ENCODE measurements at regions of chr12 and their contacts with region 1.

Region 1: DNA sequence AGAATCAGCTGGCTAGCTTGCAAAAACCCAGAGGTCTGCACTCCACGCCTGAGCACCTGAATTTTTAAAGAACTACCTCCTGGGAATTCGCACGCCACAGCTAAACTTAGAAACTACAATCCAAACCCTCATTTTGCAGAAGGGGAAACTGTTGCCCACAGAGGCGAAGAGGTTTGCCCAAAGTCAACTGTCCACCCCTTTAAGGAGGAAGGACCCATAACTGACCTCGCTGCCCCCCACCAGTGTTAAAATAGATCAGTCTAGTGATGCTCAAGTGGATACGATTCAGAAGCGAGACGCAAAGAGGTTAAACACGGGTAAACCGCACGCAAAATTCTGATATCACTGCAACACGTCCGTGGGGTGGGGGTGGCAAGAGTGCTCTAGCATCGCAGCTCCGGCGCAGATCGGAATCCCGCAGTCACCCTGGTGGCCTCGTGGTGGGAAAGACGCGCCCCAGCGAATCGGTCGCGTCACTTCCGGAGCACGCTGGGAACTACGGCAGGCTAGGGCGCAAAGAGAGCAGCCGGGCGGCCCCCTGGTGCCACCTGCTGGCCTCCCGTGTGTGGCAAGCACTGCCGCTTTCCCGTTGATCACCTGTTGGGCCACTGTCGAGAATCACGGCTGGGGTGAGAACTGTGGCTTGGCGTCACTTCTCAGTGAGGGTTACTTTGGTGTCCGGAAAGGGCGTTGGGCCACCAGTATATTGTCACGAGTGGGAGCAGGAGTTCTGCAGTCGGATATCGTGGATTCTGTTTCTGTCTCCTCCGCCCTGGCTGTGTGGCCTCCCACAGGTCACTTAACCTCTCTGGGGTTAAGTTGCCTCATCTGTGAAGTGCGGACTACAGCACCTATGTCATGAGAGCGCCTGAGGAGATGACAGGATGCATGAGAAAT is at the start of gene ALKBH2:
- ATAC-seq: peak; percentile 64 to 74 (median 66)
- H3K4me3 ChIP-seq: peak within 1 kb of the TSS; percentile 44 to 61 (median 53)
- H3K27ac ChIP-seq: peak within 1 kb of the TSS; percentile 75 to 84
- H3K4me1 ChIP-seq: peaks cover 15% of the 10 kb centered on the region in 2 donors
- total RNA-seq, gene ALKBH2: 21.6 to 51.8 (median 37.7) TPM

Region 2: DNA sequence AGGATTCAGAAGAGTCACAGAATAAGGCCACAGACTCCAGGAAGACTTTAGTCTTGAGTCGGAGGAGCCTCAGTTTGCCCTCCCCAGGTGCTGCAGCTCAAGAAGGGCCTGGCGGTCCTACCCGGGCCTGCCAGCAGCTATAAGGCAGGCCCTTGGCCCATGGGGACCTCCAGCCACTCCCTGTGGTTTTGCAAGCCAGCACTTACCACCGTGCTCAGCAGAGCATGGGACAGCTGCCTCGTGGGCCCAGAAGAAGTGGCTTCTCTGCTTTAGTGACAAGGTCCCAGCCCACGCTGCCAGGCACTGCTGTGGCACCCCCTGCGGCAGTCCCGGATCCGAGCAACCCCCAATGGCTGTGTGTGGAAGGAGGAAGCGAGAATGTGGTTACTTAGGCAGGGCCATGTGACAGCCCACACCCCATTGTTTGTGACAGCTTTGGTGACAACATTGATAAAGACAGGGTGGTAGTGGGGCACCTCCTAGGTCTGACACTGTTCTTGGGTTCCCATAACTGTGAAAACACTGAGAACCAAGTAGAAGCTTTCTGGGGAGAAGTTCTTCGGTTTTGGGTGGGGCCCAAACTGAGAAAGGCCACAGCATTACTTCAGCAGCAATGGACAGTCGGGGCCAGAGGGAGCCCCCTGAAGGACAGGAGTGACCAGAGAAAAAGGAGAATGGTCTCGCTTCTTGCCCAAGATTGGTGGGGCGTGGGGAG is 459.6 kb before region 1 on chr12 and contains the start of gene SELPLG:
- in situ Hi-C with region 1: loop called in 1 of 9 experiments (anchors 25 kb)
- ATAC-seq: no peak
- H3K4me3 ChIP-seq: no peak within 1 kb of the TSS
- H3K27ac ChIP-seq: no peak within 1 kb of the TSS
- H3K4me1 ChIP-seq: peaks cover 36 to 40% of the 10 kb centered on the region in 2 donors
- total RNA-seq, gene SELPLG: 0.38 to 4.7 (median 1.0) TPM

Region 3: DNA sequence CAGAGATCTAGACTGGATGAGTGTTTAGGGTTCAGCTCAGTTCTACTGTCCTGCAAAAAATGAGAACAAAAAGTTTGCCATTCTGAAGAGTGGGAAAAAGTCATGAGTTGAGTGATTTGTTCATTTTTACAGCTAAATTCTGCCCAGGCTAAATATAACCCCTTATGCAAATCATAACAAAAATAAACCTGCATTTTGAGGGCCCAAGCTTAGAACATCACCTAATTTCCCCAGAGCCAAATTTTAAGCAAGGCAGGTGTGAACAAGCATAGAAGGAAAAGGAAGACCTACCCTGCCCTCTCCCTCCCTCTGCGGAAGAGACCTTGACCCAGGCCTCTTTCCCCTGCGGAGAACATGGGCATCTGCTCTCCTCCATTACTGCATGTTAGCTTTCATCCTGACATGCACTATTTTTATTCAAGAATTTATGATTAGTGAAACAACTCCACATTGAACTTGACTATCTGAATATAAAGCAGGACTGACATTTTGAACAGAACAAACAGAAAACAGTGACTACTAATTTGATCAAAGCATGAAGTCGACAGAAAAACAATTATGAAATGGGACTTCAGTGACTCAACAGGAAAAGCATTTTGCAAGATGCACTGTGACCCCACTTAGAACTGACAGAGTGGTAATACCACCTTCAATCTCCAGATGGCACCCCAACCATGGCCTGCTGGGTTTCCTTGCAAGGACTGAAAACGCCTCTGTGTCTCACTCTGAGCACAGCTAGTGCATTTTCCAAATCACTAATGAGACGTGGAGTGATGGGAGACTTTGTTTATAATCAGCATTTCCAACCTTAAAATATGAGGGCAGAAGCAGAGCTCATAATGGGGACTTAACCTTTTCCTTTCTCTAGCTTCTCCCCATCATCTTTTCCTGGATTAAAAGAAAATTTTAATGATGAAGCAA is 428.7 kb before region 1 on chr12:
- in situ Hi-C with region 1: loop called in 1 of 9 experiments (anchors 25 kb)
- ATAC-seq: peak; percentile 93 to 99 (median 96)
- H3K4me3 ChIP-seq: no peak overlapping the region
- H3K27ac ChIP-seq: no peak overlapping the region
- H3K4me1 ChIP-seq: peaks cover 0 to 6% of the 10 kb centered on the region in 2 donors

Region 4: DNA sequence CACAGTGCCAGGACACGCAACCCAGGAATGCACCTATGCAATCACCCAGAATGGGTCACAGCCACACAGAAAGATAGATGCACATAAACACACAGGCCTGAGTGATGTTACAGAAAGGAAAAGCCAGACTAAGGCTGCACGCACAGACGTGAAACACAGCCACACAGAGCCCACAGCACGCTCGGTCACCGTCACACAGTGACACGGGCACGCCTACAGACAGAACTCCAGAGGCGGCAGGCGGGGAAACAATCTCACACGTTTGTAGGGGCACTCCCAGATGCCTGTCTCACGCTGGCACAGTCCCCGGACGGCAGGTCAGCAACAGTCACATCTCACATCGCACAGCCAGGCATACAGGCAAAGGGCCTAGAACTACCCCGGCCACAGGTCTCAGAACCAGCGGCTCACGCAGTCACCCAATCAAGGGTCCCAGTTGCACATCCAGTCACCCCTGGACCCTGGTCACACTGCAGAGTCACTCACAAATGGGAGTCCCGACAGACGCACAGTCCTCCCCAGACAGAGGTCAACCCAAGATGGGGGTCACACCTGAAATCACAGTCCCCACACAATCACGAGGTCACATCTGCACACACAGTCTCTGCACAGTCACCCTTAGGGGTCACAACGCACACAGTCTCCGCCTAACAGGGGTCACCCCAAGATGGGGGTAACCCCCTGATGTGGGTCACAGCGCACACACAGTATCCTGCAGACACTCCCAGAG is 236.7 kb before region 1 on chr12:
- in situ Hi-C with region 1: loop called in 1 of 9 experiments (anchors 25 kb)
- ATAC-seq: peak; percentile 15 to 31 (median 25)
- H3K4me3 ChIP-seq: peak overlapping the region; percentile 49 to 73 (median 58)
- H3K27ac ChIP-seq: peak overlapping the region; percentile 75 to 83
- H3K4me1 ChIP-seq: peaks cover 5 to 13% of the 10 kb centered on the region in 2 donors

Region 5: GRCh38 chr12:109232731-109233130 is 139.5 kb after region 1 on chr12:
- in situ Hi-C with region 1: no loop called
- ATAC-seq: no peak
- H3K4me3 ChIP-seq: no peak overlapping the region
- H3K27ac ChIP-seq: no peak overlapping the region
- H3K4me1 ChIP-seq: no peaks in the 10 kb centered on the region

Measured in motor neuron (in vitro differentiated cells).